WTC11 (cell line): ENCODE measurements at regions of chr2 and their contacts with region 1.

Region 1: GRCh38 chr2:45009303-45009927 is at the start of gene SIX2:
- DNase-seq: peak; percentile 97
- ATAC-seq: peak; percentile 73
- H3K4me3 Mint-ChIP-seq: peak within 1 kb of the TSS; percentile 74
- H3K27ac Mint-ChIP-seq: no peak within 1 kb of the TSS
- H3K4me1 Mint-ChIP-seq: peaks cover 44% of the 10 kb centered on the region
- H3K27me3 Mint-ChIP-seq: peaks cover 93% of the 10 kb centered on the region
- CTCF ChIP-seq: no peak
- total RNA-seq, gene SIX2: 1.2 to 1.7 TPM (median 1.5 TPM) in 3 replicates

Region 2: DNA sequence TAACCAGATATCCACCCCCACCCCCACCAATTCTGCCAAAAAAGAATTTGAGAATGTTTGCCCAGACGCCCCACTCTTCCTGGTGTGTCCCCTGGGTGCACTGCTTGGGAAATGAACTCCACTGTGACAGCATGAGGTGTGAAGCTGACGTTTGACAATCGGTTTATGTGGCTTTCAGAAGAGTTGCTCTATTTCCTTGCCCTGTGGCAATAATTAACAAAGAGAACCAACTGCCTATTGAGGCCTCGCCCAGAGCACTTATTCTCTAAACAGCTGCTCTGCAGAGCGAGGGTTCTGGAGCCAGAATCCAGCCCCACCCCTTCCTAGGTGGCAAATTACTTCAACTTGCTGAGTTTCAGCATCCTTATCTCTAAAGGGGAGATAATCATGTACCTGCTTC is 183.7 kb before region 1 on chr2:
- CTCF ChIA-PET with region 1: no interaction called
- POLR2A ChIA-PET with region 1: no interaction called
- DNase-seq: no peak
- ATAC-seq: no peak
- H3K4me3 Mint-ChIP-seq: no peak overlapping the region
- H3K27ac Mint-ChIP-seq: no peak overlapping the region
- H3K4me1 Mint-ChIP-seq: peaks cover 22% of the 10 kb centered on the region
- H3K27me3 Mint-ChIP-seq: peaks cover 2% of the 10 kb centered on the region; the same call in 1 of the 2 replicates
- CTCF ChIP-seq: no peak

Region 3: GRCh38 chr2:44981136-44982108 is 28.0 kb before region 1 on chr2:
- CTCF ChIA-PET with region 1: interaction called, 70 read pairs
- POLR2A ChIA-PET with region 1: no interaction called
- DNase-seq: peak; percentile 82
- ATAC-seq: peak; percentile 87
- H3K4me3 Mint-ChIP-seq: no peak overlapping the region
- H3K27ac Mint-ChIP-seq: no peak overlapping the region
- H3K4me1 Mint-ChIP-seq: peaks cover 17% of the 10 kb centered on the region
- H3K27me3 Mint-ChIP-seq: no peaks in the 10 kb centered on the region; the same call in none of the 2 replicates
- CTCF ChIP-seq: peak; percentile 87

Region 4: DNA sequence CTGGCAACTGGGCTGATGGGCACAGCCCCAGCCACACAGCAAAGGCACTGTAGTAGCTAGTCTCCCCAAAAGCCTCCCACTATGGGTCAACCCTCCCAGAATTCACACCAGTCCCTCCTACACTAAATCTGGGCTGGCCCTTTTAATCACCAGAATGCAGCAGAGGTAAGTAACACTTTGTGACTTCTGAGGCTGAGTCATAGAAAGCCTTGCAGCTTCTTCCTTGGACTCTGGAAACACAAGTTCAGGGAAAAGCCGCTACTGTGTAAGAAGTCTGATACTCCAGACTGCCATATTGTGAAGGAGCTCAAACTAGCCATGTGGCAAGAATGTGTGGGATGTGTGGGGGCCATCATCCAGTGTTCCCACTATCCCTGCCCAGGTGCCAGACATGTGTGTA is 18.9 kb after region 1 on chr2:
- CTCF ChIA-PET with region 1: interaction called, 27 read pairs
- POLR2A ChIA-PET with region 1: no interaction called
- DNase-seq: no peak
- ATAC-seq: no peak
- H3K4me3 Mint-ChIP-seq: no peak overlapping the region
- H3K27ac Mint-ChIP-seq: no peak overlapping the region
- H3K4me1 Mint-ChIP-seq: 0 out of 2 replicates have a peak, but pooled peaks cover 4% of the 10 kb centered on the region
- H3K27me3 Mint-ChIP-seq: no peaks in the 10 kb centered on the region; the same call in 1 of the 2 replicates
- CTCF ChIP-seq: no peak

Region 5: DNA sequence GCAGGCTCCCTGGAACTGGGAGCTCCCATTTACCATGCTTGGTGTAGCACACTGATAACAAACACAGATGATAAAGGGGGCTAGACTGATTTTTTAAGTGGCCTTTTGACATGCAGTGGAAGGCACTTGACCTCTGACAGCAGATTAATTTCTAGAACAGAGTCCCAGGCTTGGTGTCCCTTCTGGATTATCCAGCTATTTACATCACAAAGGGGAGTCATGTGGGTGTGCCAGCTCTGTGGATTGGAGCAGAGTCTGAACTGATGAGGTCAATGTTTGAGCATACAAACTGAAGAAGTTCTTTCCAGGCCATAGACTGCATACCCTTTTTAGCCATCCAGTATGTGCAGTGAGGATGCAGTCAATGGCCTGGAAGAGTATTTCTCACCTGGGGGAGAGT is 31.4 kb after region 1 on chr2:
- CTCF ChIA-PET with region 1: interaction called, 10 read pairs
- POLR2A ChIA-PET with region 1: no interaction called
- DNase-seq: no peak
- ATAC-seq: peak; percentile 87
- H3K4me3 Mint-ChIP-seq: no peak overlapping the region
- H3K27ac Mint-ChIP-seq: no peak overlapping the region
- H3K4me1 Mint-ChIP-seq: peaks cover 17% of the 10 kb centered on the region
- H3K27me3 Mint-ChIP-seq: peaks cover 3% of the 10 kb centered on the region; the same call in 1 of the 2 replicates
- CTCF ChIP-seq: no peak

Region 6: GRCh38 chr2:45169339-45170190 is 160.2 kb after region 1 on chr2:
- CTCF ChIA-PET with region 1: interaction called, 14 read pairs
- POLR2A ChIA-PET with region 1: no interaction called
- DNase-seq: peak; percentile 67
- ATAC-seq: peak; percentile 55
- H3K4me3 Mint-ChIP-seq: peak overlapping the region; percentile 68
- H3K27ac Mint-ChIP-seq: no peak overlapping the region
- H3K4me1 Mint-ChIP-seq: peaks cover 36% of the 10 kb centered on the region
- H3K27me3 Mint-ChIP-seq: peaks cover 73% of the 10 kb centered on the region
- CTCF ChIP-seq: no peak